Testis (tissue), 5 donors: ENCODE measurements at regions of chr12 and their contacts with region 1.

Region 1: DNA sequence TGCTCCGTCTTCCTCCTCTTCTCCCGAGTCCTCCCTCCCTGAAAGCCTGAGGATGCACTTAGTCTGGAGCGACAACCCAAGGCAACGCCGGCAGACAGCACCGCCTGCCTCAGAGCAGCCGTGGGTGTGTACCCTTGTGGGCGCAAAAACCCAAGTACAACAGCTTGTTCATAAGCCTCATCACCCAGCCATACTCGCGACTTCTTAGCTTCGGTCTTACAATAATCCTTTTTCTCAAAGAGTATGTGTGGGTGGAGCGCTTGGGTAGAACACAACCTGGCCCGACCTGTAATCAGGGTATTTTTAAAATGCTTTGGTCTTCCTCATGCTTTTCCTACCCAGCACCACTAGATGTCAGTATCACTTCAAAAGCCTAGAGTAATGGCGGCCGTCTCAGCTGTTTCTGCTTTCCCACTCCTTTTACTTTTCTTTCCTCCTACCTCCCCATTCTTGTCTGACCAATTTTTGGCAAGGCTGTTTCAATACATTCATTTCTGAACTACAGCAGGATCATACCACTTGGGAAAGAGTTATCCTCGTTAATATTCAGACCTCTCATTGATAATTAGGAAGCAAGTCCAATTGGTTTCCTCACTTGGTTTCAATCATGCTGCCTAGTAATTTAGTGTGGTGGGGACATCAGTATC is 198.9 kb downstream of the EPS8 start:
- DNase-seq: peak; percentile 76
- H3K4me3 ChIP-seq: peak overlapping the region; percentile 17 to 27
- H3K27ac ChIP-seq: peak overlapping the region in 1 of 2 donors; percentile 25
- H3K4me1 ChIP-seq: no peaks in the 10 kb centered on the region
- H3K27me3 ChIP-seq: no peaks in the 10 kb centered on the region
- CTCF ChIP-seq: peak; percentile 72 to 95 (median 94)
- POLR2A ChIP-seq: no peak

Region 2: DNA sequence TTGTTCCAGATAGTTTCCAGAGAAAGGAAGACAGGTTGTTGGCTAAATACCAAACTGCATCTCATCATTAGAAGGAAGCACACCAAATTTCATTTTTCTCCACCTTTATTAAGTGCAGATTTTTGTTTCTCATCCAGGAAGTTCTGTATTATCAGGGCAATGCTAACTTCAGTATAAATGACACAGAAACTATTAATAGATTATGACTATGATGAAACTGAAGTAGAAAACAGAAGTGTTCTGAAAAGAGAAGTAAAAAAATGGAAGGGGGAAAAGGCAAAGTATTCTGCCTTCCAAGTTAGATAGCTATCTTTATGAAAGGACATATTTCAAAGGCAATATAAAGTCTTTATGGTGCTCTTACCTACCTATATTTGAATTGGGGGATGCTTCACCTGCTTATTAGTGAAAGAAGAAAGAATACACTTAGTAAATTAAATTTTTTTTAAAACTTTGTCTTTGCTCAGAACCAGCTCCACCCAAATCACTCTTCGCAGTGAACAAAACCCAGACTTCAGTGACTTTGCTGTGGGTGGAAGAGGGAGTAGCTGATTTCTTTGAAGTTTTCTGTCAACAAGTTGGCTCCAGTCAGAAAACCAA is 44.1 kb before region 1 on chr12:
- intact Hi-C with region 1: no loop called
- DNase-seq: no peak
- H3K4me3 ChIP-seq: no peak overlapping the region
- H3K27ac ChIP-seq: peak overlapping the region in 1 of 2 donors; percentile 51
- H3K4me1 ChIP-seq: no peaks in the 10 kb centered on the region
- H3K27me3 ChIP-seq: no peaks in the 10 kb centered on the region
- CTCF ChIP-seq: no peak
- POLR2A ChIP-seq: no peak

Region 3: DNA sequence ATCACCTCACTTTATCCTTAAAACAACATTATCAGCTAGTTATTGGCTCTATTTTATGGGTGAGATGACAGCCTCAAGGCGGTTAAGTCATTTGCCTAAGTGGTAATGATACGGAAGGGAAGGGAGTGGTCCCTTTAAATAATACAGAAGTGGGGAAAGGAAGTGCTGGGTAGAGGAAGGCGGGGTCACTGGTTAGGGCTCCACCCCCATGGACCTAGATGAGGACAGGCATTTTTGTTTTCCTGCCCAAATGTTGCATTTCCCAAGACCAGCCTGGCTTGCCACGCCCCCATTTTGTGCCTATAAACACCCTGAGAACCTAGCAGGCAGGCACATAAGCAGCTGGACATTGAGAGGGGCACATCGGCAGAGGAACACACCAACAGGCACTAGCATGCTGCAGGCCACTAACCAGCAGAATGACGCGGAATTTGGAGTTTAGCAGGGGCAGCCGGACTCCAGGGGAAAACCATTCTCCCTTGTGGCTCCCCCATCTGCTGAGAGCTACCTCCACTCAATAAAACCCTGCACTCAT is 98.0 kb after region 1 on chr12:
- intact Hi-C with region 1: no loop called
- DNase-seq: peak; percentile 58
- H3K4me3 ChIP-seq: peak overlapping the region; percentile 19 to 32
- H3K27ac ChIP-seq: peak overlapping the region in 1 of 2 donors; percentile 73
- H3K4me1 ChIP-seq: peaks cover 20% of the 10 kb centered on the region
- H3K27me3 ChIP-seq: no peaks in the 10 kb centered on the region
- CTCF ChIP-seq: no peak
- POLR2A ChIP-seq: no peak

Region 4: DNA sequence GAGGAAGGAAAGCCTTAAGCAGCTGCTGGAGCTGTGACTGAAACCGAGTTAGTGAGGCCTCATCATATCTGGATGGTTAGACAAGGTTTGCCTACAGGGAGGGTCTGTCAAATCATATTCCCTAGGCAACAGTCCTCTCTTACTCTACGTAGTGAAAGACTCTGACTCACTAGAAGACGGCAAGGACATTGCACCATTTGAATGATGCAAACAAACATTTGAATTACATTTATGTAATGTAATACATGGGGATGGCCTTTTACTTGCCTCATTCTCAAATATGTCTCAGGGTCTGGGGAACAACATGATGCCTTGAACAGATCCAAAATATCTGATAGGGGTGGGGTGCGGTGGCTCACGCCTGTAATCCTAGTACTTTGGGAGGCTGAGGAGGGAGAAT is 262.1 kb after region 1 on chr12:
- intact Hi-C with region 1: loop called (anchors 5 kb)
- DNase-seq: no peak
- H3K4me3 ChIP-seq: no peak overlapping the region
- H3K27ac ChIP-seq: no peak overlapping the region
- H3K4me1 ChIP-seq: no peaks in the 10 kb centered on the region
- H3K27me3 ChIP-seq: no peaks in the 10 kb centered on the region
- CTCF ChIP-seq: no peak
- POLR2A ChIP-seq: no peak